ENCODE measurements at regions of chr2 and their contacts with region 1.

Region 1: GRCh38 chr2:172813314-172813888 is 77.8 kb downstream of the RAPGEF4 start:
- DNase-seq: no peak
- ATAC-seq: no peak
- H3K4me3 ChIP-seq: no peak overlapping the region
- H3K27ac ChIP-seq: no peak overlapping the region
- H3K4me1 ChIP-seq: no peaks in the 10 kb centered on the region
- H3K27me3 ChIP-seq: no peaks in the 10 kb centered on the region
- CTCF ChIP-seq: peak; percentile 43

Region 2: GRCh38 chr2:172938713-172939375 is 125.4 kb after region 1 on chr2:
- intact Hi-C with region 1: loop called (anchors 5 kb)
- DNase-seq: no peak
- ATAC-seq: no peak
- H3K4me3 ChIP-seq: no peak overlapping the region
- H3K27ac ChIP-seq: no peak overlapping the region
- H3K4me1 ChIP-seq: no peaks in the 10 kb centered on the region
- H3K27me3 ChIP-seq: no peaks in the 10 kb centered on the region
- CTCF ChIP-seq: no peak

Measured in upper lobe of right lung (tissue), 1 donor.